Right ventricle myocardium inferior (tissue), 1 donor: ENCODE measurements at regions of chr9 and their contacts with region 1.

Region 1: GRCh38 chr9:124297553-124297905 is 39.8 kb downstream of the NEK6 start:
- DNase-seq: peak; percentile 87
- ATAC-seq: peak; percentile 91

Region 2: DNA sequence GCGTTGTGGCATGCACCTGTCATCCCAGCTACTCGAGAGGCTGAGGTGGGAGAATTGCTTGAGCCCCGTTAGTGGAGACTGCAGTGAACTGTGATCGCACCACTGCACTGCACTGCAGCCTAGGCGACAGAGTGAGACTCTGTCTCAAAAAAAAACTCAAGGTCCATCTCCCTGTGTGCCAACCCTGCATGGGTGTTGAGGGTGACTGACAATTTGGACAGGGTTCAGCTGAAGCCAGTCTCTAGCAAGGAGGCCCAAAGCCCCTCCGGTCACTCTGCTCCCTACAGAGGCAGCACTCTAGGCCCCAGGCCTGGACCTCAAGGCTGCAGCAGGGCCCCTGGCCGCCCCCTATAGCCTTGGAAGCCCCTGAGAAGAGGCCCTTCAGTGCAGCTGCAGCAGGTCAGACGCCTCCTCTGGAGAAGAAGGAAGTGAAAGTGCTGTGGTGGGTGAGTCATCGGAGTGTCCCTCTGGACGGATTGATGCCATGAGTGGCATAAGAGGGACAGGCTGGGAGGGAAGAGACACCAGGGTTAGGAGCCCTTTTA is 79.0 kb before region 1 on chr9:
- intact Hi-C with region 1: loop called (anchors 5 kb)
- DNase-seq: no peak
- ATAC-seq: peak; percentile 38

Region 3: GRCh38 chr9:124280176-124280691 is 17.3 kb before region 1 on chr9:
- intact Hi-C with region 1: loop called (anchors 2 kb)
- DNase-seq: no peak
- ATAC-seq: peak; percentile 6